ENCODE measurements at regions of chr1 and their contacts with region 1.

Region 1: DNA sequence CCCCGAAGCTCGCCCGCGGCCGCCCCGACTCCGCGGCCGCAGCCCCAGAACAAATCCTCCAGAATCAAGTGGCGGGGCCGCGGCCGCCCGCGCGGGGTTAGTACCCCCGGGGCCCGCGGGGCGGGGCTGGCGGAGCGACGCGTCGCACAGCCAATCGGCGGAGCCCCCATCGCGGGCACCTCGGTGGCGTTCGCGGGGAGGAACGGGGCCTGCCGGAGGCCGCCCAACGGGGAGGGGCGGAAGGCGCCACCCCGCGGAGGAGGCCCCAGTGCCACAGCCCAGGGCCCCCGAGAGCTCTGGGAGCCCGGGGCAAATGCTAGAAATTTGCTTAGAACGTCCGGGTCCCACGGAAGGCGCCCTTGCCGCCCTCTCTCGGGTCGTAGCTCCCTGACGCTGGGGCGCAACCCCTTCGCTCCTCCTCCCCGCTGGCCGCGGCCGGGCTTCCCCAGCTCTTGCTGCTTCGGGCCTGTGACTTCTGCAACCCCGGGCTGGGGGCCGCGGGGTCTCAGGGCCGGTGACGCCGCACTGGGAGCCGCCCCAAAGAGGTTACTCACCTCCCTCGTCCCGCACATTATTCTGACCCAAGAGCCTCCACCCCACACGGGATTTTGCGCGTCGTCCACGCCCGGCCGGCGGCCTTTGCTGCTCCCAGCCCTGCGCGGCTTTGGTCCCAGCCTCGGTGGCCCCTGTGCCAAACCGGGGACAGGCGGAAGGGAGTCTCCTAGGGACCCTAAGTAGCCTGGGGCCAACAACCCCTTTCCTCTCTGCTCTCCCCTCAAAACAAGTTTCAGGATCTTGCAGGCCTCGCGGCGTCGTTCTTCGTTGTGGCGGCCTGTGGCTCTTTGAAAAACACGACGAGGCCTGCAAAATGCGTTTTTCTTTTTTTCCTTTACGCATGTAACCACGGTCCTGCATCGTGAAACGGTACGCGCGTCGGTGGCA is at the start of gene RUNX3:
- DNase-seq: peak; percentile 93 to 94 (median 94)
- H3K4me3 ChIP-seq: peak within 1 kb of the TSS; percentile 81 to 84
- H3K4me3 Mint-ChIP-seq: peak within 1 kb of the TSS; percentile 87 to 98 (median 97)
- H3K27ac ChIP-seq: peak within 1 kb of the TSS; percentile 98
- H3K27ac Mint-ChIP-seq: peak within 1 kb of the TSS; percentile 99 to 100 (median 100)
- H3K4me1 ChIP-seq: peaks cover 62% of the 10 kb centered on the region
- H3K4me1 Mint-ChIP-seq: peaks cover 20 to 81% (median 42%) of the 10 kb centered on the region in 4 donors
- H3K27me3 ChIP-seq: no peaks in the 10 kb centered on the region
- H3K27me3 Mint-ChIP-seq: no peaks in the 10 kb centered on the region
- total RNA-seq, gene RUNX3: 105 to 112 TPM

Region 2: DNA sequence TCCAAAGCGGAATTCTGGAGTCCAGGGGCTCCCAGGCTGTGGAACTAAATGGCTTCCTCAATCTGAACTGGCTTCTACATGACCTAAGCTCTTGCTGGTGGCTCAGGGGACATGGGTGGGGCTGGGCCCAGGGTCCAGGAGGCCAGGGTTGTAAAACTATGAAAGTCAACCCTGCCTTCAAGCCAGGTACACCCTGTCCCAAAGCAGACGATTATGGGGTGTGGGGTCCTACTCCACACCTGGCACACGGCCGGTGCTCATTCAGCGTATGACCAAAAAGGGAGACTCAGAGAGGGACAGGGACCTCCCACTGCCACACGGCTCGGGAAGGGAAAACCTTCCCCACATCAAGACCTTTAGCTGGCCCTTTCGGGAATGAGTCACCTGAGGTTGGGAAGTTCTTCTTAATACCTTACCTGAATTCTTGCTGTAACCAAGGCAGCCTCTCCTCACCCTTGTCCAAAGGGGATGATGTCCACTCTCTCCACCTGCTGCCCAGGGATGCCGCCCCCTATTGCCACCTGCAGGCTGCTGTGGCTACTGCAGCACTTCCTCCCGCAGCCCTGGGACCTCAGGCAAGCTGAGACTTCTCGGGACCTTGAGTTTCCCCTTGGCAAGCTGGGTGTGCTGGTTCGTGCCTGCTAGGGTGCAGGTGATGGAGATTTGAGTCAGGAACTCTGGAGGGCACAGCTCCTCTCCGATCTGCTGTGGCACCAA is 32.5 kb before region 1 on chr1:
- CTCF ChIA-PET with region 1: interaction called, 16 read pairs
- POLR2A ChIA-PET with region 1: interaction called, 44 read pairs
- intact Hi-C with region 1: no loop called
- DNase-seq: peak in 2 of 5 donors; percentile 36 to 49
- H3K4me3 ChIP-seq: no peak overlapping the region
- H3K4me3 Mint-ChIP-seq: peak overlapping the region in 1 of 8 donors; percentile 5
- H3K27ac ChIP-seq: no peak overlapping the region
- H3K27ac Mint-ChIP-seq: peak overlapping the region; percentile 29 to 85 (median 75)
- H3K4me1 ChIP-seq: peaks cover 18% of the 10 kb centered on the region
- H3K4me1 Mint-ChIP-seq: peaks cover 14 to 46% (median 31%) of the 10 kb centered on the region in 4 donors
- H3K27me3 ChIP-seq: no peaks in the 10 kb centered on the region
- H3K27me3 Mint-ChIP-seq: no peaks in the 10 kb centered on the region

Region 3: DNA sequence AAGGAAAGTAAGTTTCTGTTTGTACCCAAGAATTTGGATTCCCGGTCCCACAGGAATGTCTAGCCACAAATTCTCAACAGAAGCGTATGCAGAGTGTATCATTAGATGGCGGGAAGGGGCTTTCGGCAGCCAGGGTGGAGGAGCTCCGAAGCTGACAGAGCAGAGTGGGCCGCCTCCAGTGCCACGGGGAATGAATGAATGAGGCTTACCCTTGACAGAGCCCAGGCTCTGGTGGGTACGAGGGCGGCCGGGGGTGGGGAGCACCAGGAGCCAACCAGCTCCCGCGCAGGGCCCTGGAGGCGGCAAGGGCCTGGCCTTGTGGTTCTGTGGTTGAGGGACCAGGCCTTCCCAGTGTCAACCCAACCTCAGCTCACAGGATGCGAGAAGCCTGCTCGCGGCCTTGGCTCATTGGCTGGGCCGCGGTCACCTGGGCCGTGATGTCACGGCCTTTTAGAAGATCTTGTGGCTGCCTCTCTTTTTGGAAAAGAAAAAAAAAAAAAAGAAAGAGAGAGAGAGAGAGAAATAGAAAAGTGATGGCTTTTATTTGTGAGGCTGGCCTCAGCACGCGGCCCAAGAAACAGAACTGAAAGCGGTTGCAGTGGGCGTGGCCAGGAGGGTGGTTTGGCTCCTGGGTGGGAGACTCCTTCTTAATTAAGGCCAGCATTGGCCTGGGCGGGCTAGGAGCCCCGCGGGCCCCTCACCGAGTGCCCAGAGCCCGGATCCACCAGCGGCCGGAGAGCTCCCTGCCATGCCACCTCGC is 34.5 kb after region 1 on chr1:
- CTCF ChIA-PET with region 1: interaction called, 14 read pairs
- POLR2A ChIA-PET with region 1: interaction called, 56 read pairs
- intact Hi-C with region 1: no loop called
- DNase-seq: peak; percentile 90 to 95 (median 93)
- H3K4me3 ChIP-seq: peak overlapping the region; percentile 46 to 69
- H3K4me3 Mint-ChIP-seq: peak overlapping the region; percentile 69 to 91 (median 84)
- H3K27ac ChIP-seq: peak overlapping the region; percentile 69
- H3K27ac Mint-ChIP-seq: peak overlapping the region; percentile 89 to 100 (median 96)
- H3K4me1 ChIP-seq: peaks cover 45% of the 10 kb centered on the region
- H3K4me1 Mint-ChIP-seq: peaks cover 16 to 73% (median 39%) of the 10 kb centered on the region in 4 donors
- H3K27me3 ChIP-seq: no peaks in the 10 kb centered on the region
- H3K27me3 Mint-ChIP-seq: peaks cover 0 to 2% of the 10 kb centered on the region in 2 donors

Region 4: DNA sequence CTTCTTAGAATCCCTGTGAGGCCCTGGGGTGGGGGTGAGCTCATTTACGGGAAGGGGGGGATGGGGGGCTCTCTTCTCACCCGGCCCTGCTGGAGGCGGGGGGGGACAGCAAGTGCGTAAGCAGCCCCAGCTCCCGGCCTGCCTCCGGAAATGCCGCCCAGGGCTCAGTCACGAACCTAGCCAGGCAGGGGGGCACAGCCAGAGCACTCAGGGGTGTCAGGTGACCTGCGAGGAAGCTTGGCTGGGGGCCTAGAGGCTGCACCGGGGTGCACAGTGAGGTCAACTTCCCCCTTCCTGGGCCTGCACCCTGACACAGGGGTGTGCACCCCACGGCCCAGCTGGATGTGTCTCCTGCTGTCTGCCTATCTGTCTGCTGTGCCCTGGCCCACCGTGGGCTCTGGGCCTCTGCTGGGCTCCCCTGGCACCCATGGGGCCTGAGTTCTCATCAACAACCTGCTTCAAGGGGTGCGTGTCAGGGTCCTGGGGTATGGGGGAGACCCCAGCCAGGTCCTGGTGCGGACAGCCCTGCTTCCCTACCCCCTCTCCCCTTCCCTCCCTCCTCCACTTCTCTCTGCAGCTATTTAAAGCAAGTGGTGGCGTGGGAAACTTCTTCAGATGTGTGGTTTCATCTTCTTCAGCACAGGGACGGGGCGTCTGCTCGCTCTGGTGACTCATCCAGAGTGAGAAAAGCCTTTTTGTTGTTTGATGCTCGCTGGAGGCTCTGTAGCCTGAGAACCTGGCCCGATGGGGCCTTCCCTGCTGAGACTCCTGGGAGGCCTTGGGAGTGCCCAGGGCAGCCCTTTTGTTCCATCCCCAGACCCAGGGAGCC is 92.1 kb after region 1 on chr1:
- CTCF ChIA-PET with region 1: interaction called, 16 read pairs
- POLR2A ChIA-PET with region 1: interaction called, 172 read pairs
- intact Hi-C with region 1: loop called (anchors 1 kb)
- DNase-seq: peak; percentile 90 to 99 (median 94)
- H3K4me3 ChIP-seq: peak overlapping the region; percentile 14 to 20
- H3K4me3 Mint-ChIP-seq: peak overlapping the region; percentile 35 to 89 (median 70)
- H3K27ac ChIP-seq: peak overlapping the region; percentile 99
- H3K27ac Mint-ChIP-seq: peak overlapping the region; percentile 95 to 99 (median 97)
- H3K4me1 ChIP-seq: peaks cover 74% of the 10 kb centered on the region
- H3K4me1 Mint-ChIP-seq: peaks cover 27 to 76% (median 49%) of the 10 kb centered on the region in 4 donors
- H3K27me3 ChIP-seq: no peaks in the 10 kb centered on the region
- H3K27me3 Mint-ChIP-seq: no peaks in the 10 kb centered on the region

Region 5: DNA sequence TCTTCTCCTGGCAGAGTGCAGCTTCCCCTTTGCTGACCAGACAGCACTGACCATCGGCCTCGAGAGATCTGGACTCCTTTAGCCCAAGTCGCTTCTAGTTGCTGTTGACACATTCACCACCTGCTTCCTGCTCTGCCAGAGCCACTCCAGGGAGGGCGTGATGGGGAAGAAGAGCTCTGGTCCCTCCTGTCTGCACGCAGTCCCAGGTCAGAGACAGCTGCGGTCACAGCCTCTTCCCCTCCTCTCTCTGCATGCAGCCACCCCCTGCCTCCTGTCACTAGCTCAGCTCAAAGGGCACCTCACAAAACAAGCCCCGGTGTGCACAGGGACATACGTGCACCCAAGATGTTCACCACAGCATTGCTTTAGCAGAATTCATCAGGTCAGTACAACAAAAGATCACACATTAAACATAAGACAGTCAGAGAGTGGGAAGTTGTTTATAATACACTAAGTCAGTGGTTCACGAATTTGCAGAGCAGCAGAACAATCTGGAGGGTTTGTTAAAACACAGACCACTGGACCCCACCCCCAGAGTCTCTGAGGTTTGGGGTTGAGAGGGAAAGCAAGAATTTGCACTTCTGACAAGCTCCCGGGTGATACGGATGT is 169.0 kb after region 1 on chr1:
- CTCF ChIA-PET with region 1: interaction called, 62 read pairs
- POLR2A ChIA-PET with region 1: interaction called, 6 read pairs
- intact Hi-C with region 1: loop called (anchors 1 kb)
- DNase-seq: peak in 2 of 5 donors; percentile 17 to 19
- H3K4me3 ChIP-seq: no peak overlapping the region
- H3K4me3 Mint-ChIP-seq: peak overlapping the region in 6 of 8 donors; percentile 38 to 88 (median 72)
- H3K27ac ChIP-seq: no peak overlapping the region
- H3K27ac Mint-ChIP-seq: peak overlapping the region; percentile 9 to 91 (median 47)
- H3K4me1 ChIP-seq: peaks cover 60% of the 10 kb centered on the region
- H3K4me1 Mint-ChIP-seq: peaks cover 42 to 70% (median 55%) of the 10 kb centered on the region in 4 donors
- H3K27me3 ChIP-seq: no peaks in the 10 kb centered on the region
- H3K27me3 Mint-ChIP-seq: no peaks in the 10 kb centered on the region

Region 6: GRCh38 chr1:25194572-25195020 is 264.1 kb after region 1 on chr1:
- CTCF ChIA-PET with region 1: no interaction called
- POLR2A ChIA-PET with region 1: no interaction called
- intact Hi-C with region 1: no loop called
- DNase-seq: no peak
- H3K4me3 ChIP-seq: no peak overlapping the region
- H3K4me3 Mint-ChIP-seq: no peak overlapping the region
- H3K27ac ChIP-seq: no peak overlapping the region
- H3K27ac Mint-ChIP-seq: no peak overlapping the region
- H3K4me1 ChIP-seq: no peaks in the 10 kb centered on the region
- H3K4me1 Mint-ChIP-seq: peaks cover 5 to 14% (median 9%) of the 10 kb centered on the region in 4 donors
- H3K27me3 ChIP-seq: no peaks in the 10 kb centered on the region
- H3K27me3 Mint-ChIP-seq: peaks cover 4 to 6% of the 10 kb centered on the region in 2 donors